Heart left ventricle (tissue), 16 donors: ENCODE measurements at regions of chr11 and their contacts with region 1.

Region 1: GRCh38 chr11:12159351-12160099 is 49.1 kb downstream of the MICAL2 start:
- DNase-seq: no peak
- ATAC-seq: peak; percentile 39 to 56 (median 46)
- H3K4me3 ChIP-seq: no peak overlapping the region
- H3K27ac ChIP-seq: peak overlapping the region; percentile 66 to 96 (median 86)
- H3K4me1 ChIP-seq: peaks cover 3 to 90% (median 74%) of the 10 kb centered on the region in 12 donors
- H3K27me3 ChIP-seq: no peaks in the 10 kb centered on the region
- CTCF ChIP-seq: no peak
- POLR2A ChIP-seq: no peak

Region 2: DNA sequence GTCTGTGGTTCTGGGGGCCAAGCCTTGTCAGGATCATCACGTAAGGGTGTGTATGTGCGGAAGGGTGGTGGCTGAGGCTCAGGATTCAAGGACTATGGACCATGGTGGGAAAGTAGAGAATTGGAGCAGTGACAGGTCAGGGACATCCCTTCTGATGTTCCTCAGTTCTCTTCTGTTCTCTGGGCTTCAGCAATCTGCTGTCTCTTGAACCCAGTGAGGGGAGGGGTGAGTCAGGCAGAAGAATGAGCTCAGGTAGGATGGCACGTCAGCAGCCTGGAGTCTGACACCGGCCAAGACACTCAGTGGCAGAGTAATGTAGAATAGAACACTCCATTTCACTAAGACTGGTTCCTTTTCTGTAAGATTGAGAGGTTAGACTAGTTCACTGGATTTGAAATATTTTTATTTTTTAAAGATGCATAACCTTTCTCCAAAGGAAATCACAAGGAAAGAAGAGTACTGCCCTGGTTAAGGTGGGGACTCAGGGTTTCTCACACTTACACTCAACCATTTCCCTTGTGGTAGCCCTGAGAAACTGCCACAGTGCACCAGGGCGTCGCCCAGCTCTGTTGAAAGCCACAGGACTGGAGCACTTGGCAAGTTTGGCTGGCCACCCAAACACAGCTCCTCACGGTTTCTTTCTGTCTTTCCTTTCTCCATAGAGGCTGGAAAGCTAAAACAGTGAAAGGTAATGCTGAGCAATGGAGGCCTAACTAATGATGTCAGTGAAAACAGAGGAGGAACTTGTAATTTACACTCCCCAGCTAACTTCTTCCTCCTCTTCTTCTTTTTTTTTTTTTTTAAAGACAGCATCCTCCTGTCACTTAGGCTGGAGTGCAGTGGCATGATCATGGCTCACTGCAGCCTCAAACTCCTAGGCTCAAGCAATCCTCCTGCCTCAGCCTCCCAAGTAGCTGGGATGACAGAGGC is 72.2 kb before region 1 on chr11:
- intact Hi-C with region 1: loop called in 1 of 10 experiments (anchors 10 kb)
- DNase-seq: no peak
- ATAC-seq: peak in 2 of 4 donors; percentile 11 to 16
- H3K4me3 ChIP-seq: peak overlapping the region in 2 of 12 donors; percentile 13 to 20
- H3K27ac ChIP-seq: peak overlapping the region; percentile 73 to 96 (median 85)
- H3K4me1 ChIP-seq: peaks cover 12 to 75% (median 65%) of the 10 kb centered on the region in 12 donors
- H3K27me3 ChIP-seq: no peaks in the 10 kb centered on the region
- CTCF ChIP-seq: no peak
- POLR2A ChIP-seq: no peak

Region 3: GRCh38 chr11:12110201-12110713 is 49.3 kb before region 1 on chr11 and contains the start of gene MICAL2:
- intact Hi-C with region 1: loop called in 2 of 10 experiments (anchors 5 kb)
- DNase-seq: peak; percentile 92 to 95 (median 93)
- ATAC-seq: peak; percentile 95 to 99 (median 96)
- H3K4me3 ChIP-seq: peak within 1 kb of the TSS; percentile 62 to 93 (median 86)
- H3K27ac ChIP-seq: peak within 1 kb of the TSS; percentile 46 to 91 (median 84)
- H3K4me1 ChIP-seq: peaks cover 0 to 62% (median 49%) of the 10 kb centered on the region in 12 donors
- H3K27me3 ChIP-seq: no peaks in the 10 kb centered on the region
- CTCF ChIP-seq: no peak
- POLR2A ChIP-seq: peak; percentile 46 to 76
- total RNA-seq, gene MICAL2: 48.2 to 110 (median 87.8) TPM

Region 4: DNA sequence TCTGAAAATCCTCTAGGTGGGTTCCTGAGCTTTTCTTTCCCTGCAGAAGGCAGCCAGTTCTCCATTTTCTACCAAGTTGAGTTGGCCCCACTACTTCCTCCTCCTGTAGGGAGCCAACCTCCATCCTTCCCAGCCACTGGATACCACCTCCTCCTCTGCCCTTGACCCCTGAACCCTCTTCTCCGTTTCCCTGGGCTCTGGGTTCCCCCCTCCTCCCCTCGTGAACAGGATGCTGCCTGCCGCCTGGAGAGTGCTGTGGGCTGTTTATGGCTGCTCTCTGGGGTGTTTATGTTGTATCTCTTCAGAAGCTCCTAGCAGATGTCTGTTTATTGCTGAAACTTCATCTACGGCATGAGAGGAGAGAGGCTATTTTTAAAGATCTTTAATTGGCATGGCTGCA is 40.6 kb before region 1 on chr11:
- intact Hi-C with region 1: loop called in 2 of 10 experiments (anchors 5 kb)
- DNase-seq: no peak
- ATAC-seq: peak in 3 of 4 donors; percentile 9 to 25 (median 23)
- H3K4me3 ChIP-seq: no peak overlapping the region
- H3K27ac ChIP-seq: peak overlapping the region in 10 of 12 donors; percentile 1 to 81 (median 30)
- H3K4me1 ChIP-seq: peaks cover 3 to 84% (median 64%) of the 10 kb centered on the region in 12 donors
- H3K27me3 ChIP-seq: no peaks in the 10 kb centered on the region
- CTCF ChIP-seq: peak in 2 of 12 donors; percentile 6 to 22
- POLR2A ChIP-seq: no peak

Region 5: GRCh38 chr11:12175694-12176241 is 16.2 kb after region 1 on chr11:
- intact Hi-C with region 1: loop called in 1 of 10 experiments (anchors 2 kb)
- DNase-seq: no peak
- ATAC-seq: no peak
- H3K4me3 ChIP-seq: no peak overlapping the region
- H3K27ac ChIP-seq: peak overlapping the region in 2 of 12 donors; percentile 14 to 46
- H3K4me1 ChIP-seq: peaks cover 0 to 72% (median 32%) of the 10 kb centered on the region in 12 donors
- H3K27me3 ChIP-seq: no peaks in the 10 kb centered on the region
- CTCF ChIP-seq: no peak
- POLR2A ChIP-seq: no peak

Region 6: GRCh38 chr11:12200279-12201010 is 40.9 kb after region 1 on chr11:
- intact Hi-C with region 1: no loop called
- DNase-seq: peak in 4 of 5 donors; percentile 64 to 82 (median 70)
- ATAC-seq: peak; percentile 11 to 49 (median 34)
- H3K4me3 ChIP-seq: no peak overlapping the region
- H3K27ac ChIP-seq: peak overlapping the region; percentile 34 to 97 (median 85)
- H3K4me1 ChIP-seq: peaks cover 4 to 59% (median 43%) of the 10 kb centered on the region in 12 donors
- H3K27me3 ChIP-seq: no peaks in the 10 kb centered on the region
- CTCF ChIP-seq: no peak
- POLR2A ChIP-seq: no peak

Region 7: GRCh38 chr11:12216671-12217374 is 57.3 kb after region 1 on chr11:
- intact Hi-C with region 1: loop called in 5 of 10 experiments (anchors 5 to 10 kb)
- DNase-seq: peak in 1 of 5 donors; percentile 52
- ATAC-seq: peak in 2 of 4 donors; percentile 13 to 30
- H3K4me3 ChIP-seq: no peak overlapping the region
- H3K27ac ChIP-seq: peak overlapping the region in 9 of 12 donors; percentile 2 to 79 (median 43)
- H3K4me1 ChIP-seq: peaks cover 6 to 59% (median 37%) of the 10 kb centered on the region in 12 donors
- H3K27me3 ChIP-seq: no peaks in the 10 kb centered on the region
- CTCF ChIP-seq: no peak
- POLR2A ChIP-seq: no peak

Region 8: DNA sequence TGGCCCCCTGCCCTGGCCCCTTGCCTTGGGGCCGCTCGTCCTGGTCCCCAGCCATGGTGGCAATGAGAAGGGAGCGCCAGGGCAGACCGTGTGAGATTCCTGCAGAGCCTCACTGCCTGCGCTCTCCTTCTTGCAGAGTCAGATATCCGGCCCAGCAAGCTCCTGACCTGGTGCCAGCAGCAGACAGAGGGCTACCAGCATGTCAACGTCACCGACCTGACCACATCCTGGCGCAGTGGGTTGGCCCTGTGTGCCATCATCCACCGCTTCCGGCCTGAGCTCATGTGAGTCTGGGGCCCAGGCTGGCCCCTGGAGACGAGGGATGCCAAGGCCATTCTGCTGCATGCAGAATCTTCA is 65.0 kb after region 1 on chr11:
- intact Hi-C with region 1: loop called in 5 of 10 experiments (anchors 5 to 10 kb)
- DNase-seq: peak; percentile 80 to 90 (median 84)
- ATAC-seq: peak in 3 of 4 donors; percentile 44 to 65 (median 63)
- H3K4me3 ChIP-seq: peak overlapping the region in 1 of 12 donors; percentile 25
- H3K27ac ChIP-seq: peak overlapping the region in 10 of 12 donors; percentile 10 to 86 (median 46)
- H3K4me1 ChIP-seq: peaks cover 7 to 59% (median 38%) of the 10 kb centered on the region in 12 donors
- H3K27me3 ChIP-seq: no peaks in the 10 kb centered on the region
- CTCF ChIP-seq: no peak
- POLR2A ChIP-seq: no peak

Region 9: DNA sequence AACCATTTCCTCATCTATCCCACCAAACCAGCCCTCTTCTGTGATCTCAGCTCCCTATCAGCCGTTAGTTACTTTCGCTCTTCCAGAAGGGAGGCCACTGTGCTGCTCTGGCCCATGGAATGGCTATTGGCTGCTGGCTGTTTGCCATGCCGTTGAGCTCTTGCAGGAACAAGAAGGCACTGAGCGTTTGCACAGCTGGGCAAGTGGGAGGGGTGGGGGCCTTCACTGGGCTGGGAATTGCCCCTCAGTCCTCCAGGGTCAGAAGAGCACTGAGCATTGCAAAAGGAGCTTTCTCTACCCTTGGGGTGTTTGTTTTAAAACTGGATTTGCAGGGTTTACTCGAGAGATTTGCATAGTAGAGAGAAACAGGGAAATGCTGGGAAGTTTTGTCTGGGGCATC is 88.8 kb after region 1 on chr11:
- intact Hi-C with region 1: no loop called
- DNase-seq: peak; percentile 71 to 91 (median 83)
- ATAC-seq: peak; percentile 53 to 72 (median 64)
- H3K4me3 ChIP-seq: no peak overlapping the region
- H3K27ac ChIP-seq: peak overlapping the region in 10 of 12 donors; percentile 18 to 77 (median 48)
- H3K4me1 ChIP-seq: peaks cover 0 to 58% (median 28%) of the 10 kb centered on the region in 12 donors
- H3K27me3 ChIP-seq: no peaks in the 10 kb centered on the region
- CTCF ChIP-seq: no peak
- POLR2A ChIP-seq: no peak

Region 10: GRCh38 chr11:12281571-12282478 is 122.3 kb after region 1 on chr11:
- intact Hi-C with region 1: no loop called
- DNase-seq: peak; percentile 78 to 89 (median 81)
- ATAC-seq: peak in 3 of 4 donors; percentile 66 to 75 (median 70)
- H3K4me3 ChIP-seq: no peak overlapping the region
- H3K27ac ChIP-seq: no peak overlapping the region
- H3K4me1 ChIP-seq: peaks cover 0 to 24% (median 9%) of the 10 kb centered on the region in 12 donors
- H3K27me3 ChIP-seq: no peaks in the 10 kb centered on the region
- CTCF ChIP-seq: peak; percentile 92 to 98 (median 96)
- POLR2A ChIP-seq: no peak

Region 11: GRCh38 chr11:12449961-12450715 is 290.6 kb after region 1 on chr11:
- intact Hi-C with region 1: no loop called
- DNase-seq: no peak
- ATAC-seq: no peak
- H3K4me3 ChIP-seq: no peak overlapping the region
- H3K27ac ChIP-seq: peak overlapping the region in 1 of 12 donors; percentile 35
- H3K4me1 ChIP-seq: peaks cover 4 to 76% (median 27%) of the 10 kb centered on the region in 12 donors
- H3K27me3 ChIP-seq: no peaks in the 10 kb centered on the region
- CTCF ChIP-seq: no peak
- POLR2A ChIP-seq: no peak